ENCODE measurements at regions of chr1 and their contacts with region 1.

Region 1: DNA sequence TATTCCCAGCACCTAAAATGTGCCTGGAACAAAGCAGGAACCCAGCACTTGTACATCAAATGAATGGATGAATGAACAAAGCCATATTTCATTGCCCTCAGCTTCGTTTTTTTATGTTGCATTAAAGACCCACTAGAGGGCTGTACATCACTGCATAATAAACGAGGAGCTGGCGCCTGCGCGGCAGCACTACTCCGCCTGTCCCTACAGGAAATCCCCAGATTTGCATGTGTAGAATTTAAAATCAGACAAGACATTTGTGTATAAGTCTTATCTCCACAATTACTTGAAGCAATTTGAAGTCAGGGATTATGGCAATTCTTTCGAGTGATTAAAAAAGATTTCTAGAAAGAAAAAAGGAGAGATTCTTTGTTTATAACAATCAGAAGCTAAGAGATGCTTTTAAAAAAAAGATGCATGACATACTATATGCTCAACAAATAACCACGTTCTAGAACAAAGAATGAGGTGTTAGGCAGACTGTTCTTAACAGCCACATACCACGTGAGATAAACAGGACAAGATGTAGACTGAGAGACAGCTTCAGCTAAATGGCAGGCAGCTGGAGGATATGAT is 5.4 kb upstream of the NEK2 start:
- DNase-seq: peak; percentile 62 to 91 (median 82)

Region 2: GRCh38 chr1:212035123-212035834 is 354.4 kb after region 1 on chr1 and contains the starts of genes DTL and INTS7:
- intact Hi-C with region 1: loop called (anchors 5 kb)
- DNase-seq: peak; percentile 93 to 99 (median 98)

Measured in head of caudate nucleus (tissue), 42 donors.